BJ (cell line): ENCODE measurements at regions of chr6 and their contacts with region 1.

Region 1: DNA sequence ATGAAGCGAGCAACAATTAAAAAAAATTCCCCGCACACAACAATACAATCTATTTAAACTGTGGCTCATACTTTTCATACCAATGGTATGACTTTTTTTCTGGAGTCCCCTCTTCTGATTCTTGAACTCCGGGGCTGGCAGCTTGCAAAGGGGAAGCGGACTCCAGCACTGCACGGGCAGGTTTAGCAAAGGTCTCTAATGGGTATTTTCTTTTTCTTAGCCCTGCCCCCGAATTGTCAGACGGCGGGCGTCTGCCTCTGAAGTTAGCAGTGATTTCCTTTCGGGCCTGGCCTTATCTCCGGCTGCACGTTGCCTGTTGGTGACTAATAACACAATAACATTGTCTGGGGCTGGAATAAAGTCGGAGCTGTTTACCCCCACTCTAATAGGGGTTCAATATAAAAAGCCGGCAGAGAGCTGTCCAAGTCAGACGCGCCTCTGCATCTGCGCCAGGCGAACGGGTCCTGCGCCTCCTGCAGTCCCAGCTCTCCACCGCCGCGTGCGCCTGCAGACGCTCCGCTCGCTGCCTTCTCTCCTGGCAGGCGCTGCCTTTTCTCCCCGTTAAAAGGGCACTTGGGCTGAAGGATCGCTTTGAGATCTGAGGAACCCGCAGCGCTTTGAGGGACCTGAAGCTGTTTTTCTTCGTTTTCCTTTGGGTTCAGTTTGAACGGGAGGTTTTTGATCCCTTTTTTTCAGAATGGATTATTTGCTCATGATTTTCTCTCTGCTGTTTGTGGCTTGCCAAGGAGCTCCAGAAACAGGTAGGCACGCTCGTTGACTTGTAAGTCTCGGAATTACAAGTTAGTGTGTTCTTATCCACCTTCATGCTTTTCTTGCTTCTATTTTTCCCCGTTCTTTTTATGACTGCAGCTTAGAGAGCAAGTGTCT is at the start of gene EDN1:
- DNase-seq: no peak
- H3K4me3 ChIP-seq: peak within 1 kb of the TSS; percentile 58
- H3K27me3 ChIP-seq: no peaks in the 10 kb centered on the region
- CTCF ChIP-seq: peak; percentile 76
- polyA plus RNA-seq, gene EDN1: 3.2 and 4.0 TPM in 2 replicates

Region 2: GRCh38 chr6:11585426-11586016 is 704.7 kb before region 1 on chr6:
- CTCF ChIA-PET with region 1: interaction called, 35 read pairs
- POLR2A ChIA-PET with region 1: no interaction called
- DNase-seq: no peak
- H3K4me3 ChIP-seq: no peak overlapping the region
- H3K27me3 ChIP-seq: no peaks in the 10 kb centered on the region
- CTCF ChIP-seq: peak; percentile 55

Region 3: DNA sequence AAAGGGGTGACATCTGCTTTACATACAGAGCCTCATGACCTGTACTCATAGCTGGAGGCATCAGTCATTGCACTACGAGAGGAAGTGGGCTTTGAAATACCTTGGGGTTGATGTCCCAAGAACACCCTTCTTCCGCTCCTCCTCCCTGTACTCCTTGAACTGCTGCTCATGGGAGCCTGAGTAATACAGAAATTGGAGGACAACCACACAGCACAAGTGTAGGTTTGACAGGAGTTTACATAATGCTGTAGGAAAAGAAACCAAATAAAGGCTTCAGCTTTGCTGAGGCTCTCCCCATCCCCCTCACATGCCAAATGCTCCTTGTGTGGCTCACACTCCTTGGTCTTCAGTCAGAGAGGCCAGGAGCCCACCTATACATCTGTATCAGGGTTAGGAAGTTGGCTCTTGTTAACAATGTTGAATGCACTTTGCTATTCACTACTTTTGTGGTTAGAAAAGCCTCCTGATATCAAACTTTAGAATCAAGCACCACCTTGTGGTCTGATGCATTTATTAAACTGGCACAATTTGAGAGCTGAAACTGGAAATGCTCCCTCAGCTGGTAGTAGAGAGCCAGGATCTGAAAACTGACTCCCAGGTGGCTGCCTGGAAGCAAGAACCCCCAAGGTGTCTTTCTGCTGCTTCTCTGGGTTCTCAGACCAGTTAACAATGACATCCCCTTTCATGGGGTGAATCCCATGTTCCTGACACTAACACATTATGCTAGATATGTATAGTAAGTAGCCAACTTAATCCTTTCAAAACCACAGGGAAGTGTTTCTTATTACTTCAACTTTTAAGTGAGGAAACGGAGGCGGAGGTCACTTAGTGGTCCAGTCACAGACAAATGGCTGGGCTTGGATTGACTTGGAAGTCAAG is 56.2 kb before region 1 on chr6:
- CTCF ChIA-PET with region 1: interaction called, 34 read pairs
- POLR2A ChIA-PET with region 1: no interaction called
- DNase-seq: peak; percentile 40
- H3K4me3 ChIP-seq: no peak overlapping the region
- H3K27me3 ChIP-seq: no peaks in the 10 kb centered on the region
- CTCF ChIP-seq: peak; percentile 86

Region 4: GRCh38 chr6:12605888-12606345 is 315.7 kb after region 1 on chr6:
- CTCF ChIA-PET with region 1: interaction called, 212 read pairs
- POLR2A ChIA-PET with region 1: interaction called, 3 read pairs
- DNase-seq: no peak
- H3K4me3 ChIP-seq: no peak overlapping the region
- H3K27me3 ChIP-seq: no peaks in the 10 kb centered on the region
- CTCF ChIP-seq: peak; percentile 82

Region 5: DNA sequence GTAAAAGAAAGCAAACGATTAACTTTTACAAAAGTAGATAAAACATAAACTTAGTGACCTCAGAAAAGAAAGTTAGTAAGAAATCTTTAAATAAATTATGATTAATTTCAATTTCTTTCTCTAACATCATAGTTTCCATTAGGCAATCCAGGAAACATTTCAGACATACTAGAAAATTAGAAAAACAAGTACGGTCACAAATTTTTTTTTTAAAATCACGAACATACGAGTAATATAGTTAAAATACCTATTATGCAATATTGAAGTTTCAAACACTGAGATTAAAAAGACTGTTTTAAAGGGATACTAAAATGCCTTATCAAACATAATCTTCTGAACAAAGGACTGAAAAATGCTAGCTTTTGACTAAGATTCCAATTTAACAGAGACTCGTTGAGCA is 1351.1 kb after region 1 on chr6:
- CTCF ChIA-PET with region 1: no interaction called
- POLR2A ChIA-PET with region 1: no interaction called
- DNase-seq: no peak
- H3K4me3 ChIP-seq: no peak overlapping the region
- H3K27me3 ChIP-seq: no peaks in the 10 kb centered on the region
- CTCF ChIP-seq: no peak